Activated CD4-positive, alpha-beta T cell treated with anti-CD3 and anti-CD28 coated beads for 36 hours (primary cell): ENCODE measurements at regions of chr2 and their contacts with region 1.

Region 1: GRCh38 chr2:197293252-197294007 is 17.1 kb downstream of the ANKRD44 start:
- DNase-seq: peak; percentile 51
- ATAC-seq: peak; percentile 59
- H3K4me3 Mint-ChIP-seq: peak overlapping the region; percentile 67
- H3K27ac Mint-ChIP-seq: peak overlapping the region; percentile 93
- H3K4me1 Mint-ChIP-seq: peaks cover 92% of the 10 kb centered on the region
- H3K27me3 Mint-ChIP-seq: no peaks in the 10 kb centered on the region

Region 2: GRCh38 chr2:197037863-197038398 is 255.5 kb before region 1 on chr2:
- CTCF ChIA-PET with region 1: no interaction called
- POLR2A ChIA-PET with region 1: no interaction called
- intact Hi-C with region 1: no loop called
- DNase-seq: no peak
- ATAC-seq: peak; percentile 32
- H3K4me3 Mint-ChIP-seq: no peak overlapping the region
- H3K27ac Mint-ChIP-seq: peak overlapping the region; percentile 42
- H3K4me1 Mint-ChIP-seq: peaks cover 47% of the 10 kb centered on the region
- H3K27me3 Mint-ChIP-seq: no peaks in the 10 kb centered on the region

Region 3: GRCh38 chr2:197209742-197210408 is 83.6 kb before region 1 on chr2:
- CTCF ChIA-PET with region 1: interaction called, 4 read pairs
- POLR2A ChIA-PET with region 1: interaction called, 5 read pairs
- intact Hi-C with region 1: loop called in 1 of 2 experiments (anchors 2 kb)
- DNase-seq: peak; percentile 82
- ATAC-seq: peak; percentile 64
- H3K4me3 Mint-ChIP-seq: peak overlapping the region; percentile 30
- H3K27ac Mint-ChIP-seq: peak overlapping the region; percentile 99
- H3K4me1 Mint-ChIP-seq: peaks cover 98% of the 10 kb centered on the region
- H3K27me3 Mint-ChIP-seq: no peaks in the 10 kb centered on the region

Region 4: DNA sequence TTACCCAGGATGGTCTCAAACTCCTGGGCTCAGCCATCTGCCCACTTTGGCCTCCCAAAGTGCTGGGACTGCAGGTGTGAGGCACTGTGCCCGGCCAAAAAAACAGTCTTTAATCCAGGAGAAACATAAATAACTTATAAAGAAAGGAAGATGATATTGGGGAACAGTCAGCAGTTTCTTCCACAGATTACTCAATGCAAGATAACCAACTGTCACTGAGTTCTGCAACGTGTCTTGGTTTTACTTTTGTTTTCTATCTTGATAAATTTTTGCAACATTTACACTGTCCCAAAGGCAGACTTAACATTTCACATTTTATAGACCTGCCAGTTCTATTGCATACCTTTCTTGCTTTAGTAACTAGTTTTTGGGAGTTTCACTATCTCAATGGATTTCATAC is 54.0 kb before region 1 on chr2:
- CTCF ChIA-PET with region 1: interaction called, 3 read pairs
- POLR2A ChIA-PET with region 1: no interaction called
- intact Hi-C with region 1: loop called in 1 of 2 experiments (anchors 1 kb)
- DNase-seq: no peak
- ATAC-seq: peak; percentile 59
- H3K4me3 Mint-ChIP-seq: peak overlapping the region; percentile 75
- H3K27ac Mint-ChIP-seq: peak overlapping the region; percentile 92
- H3K4me1 Mint-ChIP-seq: peaks cover 87% of the 10 kb centered on the region
- H3K27me3 Mint-ChIP-seq: no peaks in the 10 kb centered on the region

Region 5: DNA sequence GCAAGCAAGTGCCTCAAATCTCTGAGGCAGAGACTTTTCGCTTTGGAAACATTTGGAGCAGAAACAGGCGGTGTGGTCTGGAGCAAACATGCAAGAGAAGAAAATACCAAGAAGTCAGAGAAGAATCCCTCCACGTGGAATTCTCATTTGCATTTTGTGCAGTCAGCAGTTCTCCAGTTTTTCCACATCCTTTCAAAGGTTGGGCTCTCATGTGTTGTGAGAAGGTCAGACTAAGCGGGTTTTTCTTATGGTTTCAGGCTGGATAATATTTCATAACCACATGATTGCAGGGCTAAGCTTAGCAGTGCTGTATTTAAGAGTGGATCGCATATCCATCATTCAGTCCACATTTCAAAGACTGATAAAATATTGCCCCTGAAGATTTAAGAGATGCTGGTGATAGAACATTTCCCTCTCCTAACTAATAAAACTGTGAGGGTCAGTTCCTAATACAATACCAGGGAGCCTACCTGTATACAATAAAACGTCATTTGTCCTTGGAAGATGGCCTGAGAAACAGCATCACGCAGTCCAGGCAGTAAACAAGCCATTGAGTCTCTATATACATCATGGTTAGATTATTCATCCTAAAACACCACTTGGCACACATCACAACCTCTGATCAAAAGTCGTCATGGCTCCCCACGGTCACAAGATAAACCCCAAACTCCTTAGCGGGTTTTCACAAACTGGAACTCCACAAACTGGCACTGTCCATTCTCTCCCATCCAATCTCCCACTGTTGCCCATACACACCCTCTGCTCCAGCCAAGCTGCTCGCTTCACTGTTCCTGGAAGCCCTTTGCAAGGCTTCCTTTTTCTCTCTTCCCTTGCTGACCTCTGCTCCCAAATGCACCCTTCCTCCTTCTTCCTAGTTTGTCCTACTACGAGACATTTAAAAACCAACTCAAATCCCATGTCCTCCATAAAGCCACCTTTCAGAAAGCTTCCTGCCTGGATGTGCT is 14.3 kb before region 1 on chr2:
- CTCF ChIA-PET with region 1: interaction called, 11 read pairs
- POLR2A ChIA-PET with region 1: interaction called, 3 read pairs
- intact Hi-C with region 1: no loop called
- DNase-seq: no peak
- ATAC-seq: peak; percentile 47
- H3K4me3 Mint-ChIP-seq: peak overlapping the region; percentile 44
- H3K27ac Mint-ChIP-seq: peak overlapping the region; percentile 90
- H3K4me1 Mint-ChIP-seq: peaks cover 78% of the 10 kb centered on the region
- H3K27me3 Mint-ChIP-seq: no peaks in the 10 kb centered on the region